PC-3 (cell line): ENCODE measurements at regions of chr3 and their contacts with region 1.

Region 1: DNA sequence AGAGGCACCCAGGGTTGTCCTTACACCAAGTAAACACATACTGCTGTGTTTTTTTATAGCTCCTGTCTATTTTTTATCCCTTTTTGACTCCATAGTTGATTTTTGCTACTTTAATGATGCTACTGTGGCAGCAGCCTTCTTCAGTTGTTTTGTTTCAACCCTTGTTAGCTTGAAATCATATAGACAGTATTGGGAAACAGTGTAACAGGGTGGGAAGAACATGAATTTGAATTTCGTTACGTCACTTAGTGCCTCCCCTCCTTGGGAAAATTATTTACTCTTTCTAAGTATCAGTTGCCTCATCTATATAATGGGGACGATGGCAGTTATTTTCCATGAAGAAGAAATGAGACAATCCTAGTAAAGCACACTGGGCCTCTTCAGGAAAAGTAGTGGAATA is 409.8 kb upstream of the TPRG1 start:
- DNase-seq: no peak
- ATAC-seq: no peak
- H3K4me3 ChIP-seq: no peak overlapping the region
- H3K27ac ChIP-seq: no peak overlapping the region
- H3K4me1 ChIP-seq: no peaks in the 10 kb centered on the region
- H3K27me3 ChIP-seq: no peaks in the 10 kb centered on the region
- CTCF ChIP-seq: no peak

Region 2: DNA sequence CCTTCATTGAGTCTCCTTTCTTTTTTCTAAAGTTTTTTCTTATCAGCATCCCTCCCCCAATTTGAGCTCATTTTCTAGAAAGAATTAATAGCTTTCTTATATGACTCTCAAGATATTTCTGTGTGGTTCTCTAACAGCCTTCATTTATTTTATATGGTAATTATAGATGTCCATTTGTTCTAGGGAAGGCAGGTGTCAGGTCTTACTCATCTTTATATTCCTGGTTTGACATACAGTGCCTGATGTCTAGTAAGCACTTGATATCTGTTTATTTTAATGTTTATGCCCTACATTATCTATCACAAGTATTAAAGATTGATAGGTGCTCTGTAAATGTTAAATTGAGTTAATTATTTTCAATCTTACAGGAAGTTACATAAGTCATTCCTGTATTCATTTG is 16.9 kb before region 1 on chr3:
- CTCF ChIA-PET with region 1: no interaction called
- POLR2A ChIA-PET with region 1: no interaction called
- intact Hi-C with region 1: loop called (anchors 2 kb)
- DNase-seq: no peak
- ATAC-seq: no peak
- H3K4me3 ChIP-seq: no peak overlapping the region
- H3K27ac ChIP-seq: no peak overlapping the region
- H3K4me1 ChIP-seq: no peaks in the 10 kb centered on the region
- H3K27me3 ChIP-seq: no peaks in the 10 kb centered on the region
- CTCF ChIP-seq: no peak

Region 3: DNA sequence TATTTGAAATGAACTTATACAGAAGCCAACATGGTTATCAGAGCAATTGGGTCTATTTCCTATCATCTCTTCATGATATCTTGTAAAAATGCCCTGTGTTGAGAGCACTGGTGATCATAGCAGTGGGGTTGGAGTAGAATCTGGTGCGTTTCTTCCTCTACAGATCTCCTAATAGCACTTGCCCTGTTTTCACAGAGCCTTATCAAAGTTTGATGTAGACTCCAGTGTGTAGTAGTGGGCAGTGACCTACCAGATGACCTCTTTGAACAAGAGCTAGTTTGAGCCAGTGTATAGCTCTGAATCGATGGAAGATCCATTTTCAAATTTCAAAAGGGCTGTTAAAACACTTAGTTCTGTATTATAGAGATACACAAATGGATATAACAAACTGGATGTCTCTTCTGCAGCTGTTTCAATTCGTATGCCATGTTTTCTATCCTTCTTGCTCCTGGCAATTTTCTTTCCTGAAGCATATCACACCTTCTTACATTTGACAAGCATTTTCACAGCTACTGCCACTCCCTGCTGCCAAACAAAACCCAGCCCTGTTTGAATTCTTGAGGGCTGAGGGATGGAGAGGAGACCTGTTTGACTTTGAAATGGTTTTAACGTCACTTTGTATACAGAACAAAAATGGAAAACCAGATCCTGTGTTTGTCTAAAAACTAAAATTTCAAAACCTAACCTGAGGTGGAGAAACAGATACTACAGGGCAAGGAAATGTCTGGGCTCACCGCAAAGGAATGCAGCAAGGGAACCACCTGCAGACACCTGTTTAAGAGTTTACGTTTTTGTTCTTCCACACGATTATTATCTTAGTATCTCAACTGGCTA is 55.4 kb after region 1 on chr3:
- CTCF ChIA-PET with region 1: no interaction called
- POLR2A ChIA-PET with region 1: no interaction called
- intact Hi-C with region 1: no loop called
- DNase-seq: no peak
- ATAC-seq: no peak
- H3K4me3 ChIP-seq: no peak overlapping the region
- H3K27ac ChIP-seq: no peak overlapping the region
- H3K4me1 ChIP-seq: no peaks in the 10 kb centered on the region
- H3K27me3 ChIP-seq: no peaks in the 10 kb centered on the region
- CTCF ChIP-seq: no peak